Mammary epithelial cell (primary cell): ENCODE measurements at regions of chr2 and their contacts with region 1.

Region 1: DNA sequence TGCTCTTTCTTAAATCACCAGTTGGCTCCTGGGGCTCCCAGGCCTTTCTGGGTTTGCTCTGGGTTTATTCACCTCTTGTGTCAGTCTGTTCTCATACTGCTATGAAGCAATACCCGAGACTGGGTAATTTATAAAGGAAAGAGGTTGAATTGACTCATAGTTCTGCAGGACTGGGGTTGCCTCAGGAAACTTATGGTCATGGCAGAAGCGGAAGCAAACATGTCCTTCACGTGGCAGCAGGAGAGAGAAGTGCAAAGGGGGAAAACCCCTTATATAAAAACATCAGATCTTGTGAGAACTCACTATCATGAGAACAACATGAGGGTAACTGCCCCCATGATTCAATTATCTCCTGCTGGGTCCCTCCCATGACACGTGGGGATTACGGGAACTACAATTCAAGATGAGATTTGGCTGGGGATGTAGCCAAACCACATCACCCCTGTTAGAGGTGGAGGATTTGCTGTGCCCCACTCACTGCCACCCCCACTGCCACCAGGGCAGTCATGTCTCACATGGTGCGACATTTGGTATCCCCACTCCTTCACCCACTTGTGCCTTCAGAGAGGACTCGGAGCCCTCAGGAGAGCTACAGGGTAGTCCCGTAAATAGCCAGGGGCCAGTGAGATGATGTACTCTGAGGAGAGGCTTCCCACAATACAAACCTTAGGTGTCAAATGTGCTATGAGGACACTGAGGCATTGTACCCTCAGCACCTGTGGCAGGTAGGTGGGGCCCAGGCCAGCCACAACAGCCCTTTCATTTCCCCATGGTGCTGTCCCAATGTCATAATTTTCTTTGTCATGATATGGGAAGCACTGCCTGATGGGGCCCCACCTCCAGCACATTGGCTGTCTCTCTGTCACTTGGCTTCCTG is 35.7 kb downstream of the CDC42EP3 start:
- DNase-seq: peak; percentile 98
- H3K4me3 ChIP-seq: no peak overlapping the region
- H3K27ac ChIP-seq: peak overlapping the region; percentile 67
- H3K4me1 ChIP-seq: peaks cover 15% of the 10 kb centered on the region
- H3K27me3 ChIP-seq: no peaks in the 10 kb centered on the region
- CTCF ChIP-seq: no peak

Region 2: GRCh38 chr2:37537316-37537715 is 98.4 kb before region 1 on chr2:
- CTCF ChIA-PET with region 1: no interaction called
- dilution Hi-C with region 1: no loop called
- in situ Hi-C with region 1: no loop called
- intact Hi-C with region 1: loop called (anchors 2 kb)
- DNase-seq: no peak
- H3K4me3 ChIP-seq: no peak overlapping the region
- H3K27ac ChIP-seq: no peak overlapping the region
- H3K4me1 ChIP-seq: no peaks in the 10 kb centered on the region
- H3K27me3 ChIP-seq: no peaks in the 10 kb centered on the region
- CTCF ChIP-seq: no peak

Region 3: GRCh38 chr2:37561615-37562569 is 73.8 kb before region 1 on chr2:
- CTCF ChIA-PET with region 1: no interaction called
- dilution Hi-C with region 1: no loop called
- in situ Hi-C with region 1: no loop called
- intact Hi-C with region 1: loop called (anchors 5 kb)
- DNase-seq: peak; percentile 93
- H3K4me3 ChIP-seq: no peak overlapping the region
- H3K27ac ChIP-seq: peak overlapping the region; percentile 93
- H3K4me1 ChIP-seq: peaks cover 29% of the 10 kb centered on the region
- H3K27me3 ChIP-seq: no peaks in the 10 kb centered on the region
- CTCF ChIP-seq: no peak